Psoas muscle (tissue), 8 donors: ENCODE measurements at regions of chr4 and their contacts with region 1.

Region 1: GRCh38 chr4:29415771-29416170 is 1304.4 kb upstream of the PCDH7 start:
- DNase-seq: no peak
- ATAC-seq: no peak
- H3K4me3 ChIP-seq: no peak overlapping the region
- H3K27ac ChIP-seq: no peak overlapping the region
- H3K4me1 ChIP-seq: no peaks in the 10 kb centered on the region
- H3K27me3 ChIP-seq: no peaks in the 10 kb centered on the region
- CTCF ChIP-seq: no peak

Region 2: DNA sequence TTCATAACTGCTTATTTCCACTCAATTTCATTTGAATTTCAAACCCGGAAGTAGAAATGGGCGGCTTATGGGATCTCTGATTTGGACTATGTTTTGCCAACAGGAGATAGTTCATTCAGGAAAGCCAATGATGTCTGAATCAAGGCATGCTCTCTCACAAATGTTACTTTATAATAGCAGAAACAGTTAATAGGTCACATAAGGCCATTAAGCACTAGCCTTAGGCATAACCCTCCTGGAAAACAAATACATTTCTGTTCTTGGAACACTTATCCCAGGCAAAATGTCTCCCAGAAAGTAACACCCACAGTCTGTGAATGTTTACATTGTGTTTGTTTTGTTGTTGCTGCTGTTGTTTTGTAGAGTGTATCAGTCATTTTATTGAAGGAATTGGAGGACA is 42.8 kb before region 1 on chr4:
- intact Hi-C with region 1: loop called in 1 of 2 experiments (anchors 5 kb)
- DNase-seq: no peak
- ATAC-seq: no peak
- H3K4me3 ChIP-seq: no peak overlapping the region
- H3K27ac ChIP-seq: no peak overlapping the region
- H3K4me1 ChIP-seq: no peaks in the 10 kb centered on the region
- H3K27me3 ChIP-seq: no peaks in the 10 kb centered on the region
- CTCF ChIP-seq: no peak